Astrocyte of the cerebellum (primary cell): ENCODE measurements at regions of chr6 and their contacts with region 1.

Region 1: DNA sequence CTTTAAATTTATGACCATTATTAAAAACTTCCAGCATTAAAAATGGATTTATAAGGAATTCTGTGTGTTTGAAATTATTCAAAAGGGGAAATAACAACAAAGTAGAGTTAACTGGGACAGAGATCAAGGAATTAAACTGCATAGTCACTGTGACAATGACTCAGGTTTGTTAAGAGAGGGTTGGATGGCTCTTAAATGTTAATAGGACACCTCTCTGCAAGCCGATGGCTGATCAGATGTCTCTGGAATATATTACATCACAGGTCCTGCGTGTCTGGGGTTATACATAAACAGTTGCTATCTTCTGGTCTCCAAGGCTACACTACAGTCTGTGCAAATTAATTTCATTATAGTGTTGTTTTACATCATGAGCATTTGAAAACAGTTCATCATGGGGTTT is 574.3 kb downstream of the COL12A1 start:
- DNase-seq: no peak
- H3K4me3 ChIP-seq: no peak overlapping the region
- CTCF ChIP-seq: no peak

Region 2: DNA sequence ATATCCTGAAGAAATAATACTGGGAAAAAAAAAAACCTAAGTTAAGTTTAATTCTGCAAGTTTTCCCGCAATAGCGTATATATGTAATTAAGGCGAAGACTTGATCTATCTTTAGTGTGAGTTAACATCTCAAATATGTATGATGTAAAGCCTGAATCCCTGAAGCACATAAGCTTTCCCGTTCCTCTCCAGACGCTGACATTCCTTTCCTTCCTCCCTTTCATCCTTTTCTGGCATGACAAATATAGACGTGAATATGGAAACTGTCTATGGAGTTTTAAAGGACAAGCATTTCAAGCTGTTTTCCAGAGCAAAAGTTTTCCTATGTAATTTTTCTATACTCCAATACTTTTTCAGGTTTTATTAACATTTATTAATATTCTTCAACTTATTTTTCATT is 62.7 kb before region 1 on chr6:
- in situ Hi-C with region 1: loop called (anchors 5 kb)
- DNase-seq: no peak
- H3K4me3 ChIP-seq: no peak overlapping the region
- CTCF ChIP-seq: no peak